ENCODE measurements at regions of chr19 and their contacts with region 1.

Region 1: DNA sequence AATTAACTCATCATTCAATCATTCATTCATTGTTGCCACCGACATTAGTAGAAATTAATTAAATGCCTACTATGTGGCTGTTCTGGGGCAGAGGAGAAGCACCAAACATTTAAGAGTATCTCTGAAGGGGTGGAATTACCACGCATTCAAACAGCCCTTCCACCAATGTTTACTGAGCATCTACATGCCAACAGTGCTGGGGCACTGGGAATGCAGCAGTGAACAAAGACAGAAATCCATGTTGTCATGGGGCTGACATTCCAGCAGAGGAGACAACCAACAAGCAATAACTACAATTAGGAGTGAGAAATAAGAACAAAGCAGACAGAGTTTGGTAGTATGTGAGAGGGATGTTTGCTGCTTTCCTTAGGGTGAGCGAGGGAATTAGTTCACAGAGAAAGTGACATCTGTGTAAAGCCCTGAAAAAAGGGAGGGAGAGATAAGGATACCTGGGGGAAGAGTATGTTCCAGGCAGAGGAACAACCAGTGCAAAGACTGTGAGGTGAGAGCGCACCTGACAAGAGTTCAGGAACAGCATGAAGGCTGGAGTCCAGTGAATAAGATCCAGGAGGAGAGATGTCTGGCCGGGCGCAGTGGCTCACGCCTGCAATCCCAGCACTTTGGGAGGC is 1.3 kb upstream of the PAK4 start:
- DNase-seq: no peak
- H3K4me3 Mint-ChIP-seq: peak overlapping the region; percentile 68
- H3K27ac Mint-ChIP-seq: peak overlapping the region; percentile 76
- H3K4me1 Mint-ChIP-seq: peaks cover 27% of the 10 kb centered on the region
- H3K27me3 Mint-ChIP-seq: peaks cover 7% of the 10 kb centered on the region

Region 2: GRCh38 chr19:39187559-39187957 is 63.3 kb after region 1 on chr19:
- intact Hi-C with region 1: loop called (anchors 1 kb)
- DNase-seq: no peak
- H3K4me3 Mint-ChIP-seq: no peak overlapping the region
- H3K27ac Mint-ChIP-seq: no peak overlapping the region
- H3K4me1 Mint-ChIP-seq: no peaks in the 10 kb centered on the region
- H3K27me3 Mint-ChIP-seq: peaks cover 9% of the 10 kb centered on the region

Region 3: DNA sequence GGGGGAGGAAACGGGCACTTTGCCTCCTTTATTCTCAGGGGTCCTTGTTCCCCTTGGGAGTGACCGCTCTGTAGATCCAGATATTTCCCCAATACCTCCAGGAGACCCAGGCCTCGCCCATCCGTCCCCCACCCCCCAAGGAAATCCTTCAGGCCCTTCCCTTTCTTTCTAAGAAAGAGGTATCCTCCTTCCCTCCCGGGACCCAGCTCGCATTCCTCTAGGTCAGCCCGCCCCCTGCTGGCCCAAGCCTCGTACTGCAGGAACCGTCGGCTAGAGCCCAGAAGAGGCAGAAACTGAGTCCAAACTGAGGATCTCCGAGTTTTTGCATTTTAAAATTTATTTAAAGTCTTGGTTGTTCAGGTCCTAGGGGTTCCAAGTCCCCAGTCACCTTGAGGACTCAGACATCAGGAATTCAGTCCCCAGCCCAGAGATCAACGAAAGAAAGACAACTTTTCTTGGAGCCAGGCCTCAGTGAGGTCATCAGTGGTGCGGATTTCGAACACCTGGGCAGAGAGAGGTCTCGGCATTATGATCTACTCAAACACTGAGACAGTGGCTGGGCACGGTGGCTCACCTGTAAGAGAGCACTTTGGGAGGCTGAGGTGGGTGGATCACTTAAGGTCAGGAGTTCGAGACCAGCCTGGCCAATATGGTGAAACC is 203.9 kb after region 1 on chr19:
- intact Hi-C with region 1: loop called (anchors 1 kb)
- DNase-seq: peak; percentile 95
- H3K4me3 Mint-ChIP-seq: no peak overlapping the region
- H3K27ac Mint-ChIP-seq: peak overlapping the region; percentile 45
- H3K4me1 Mint-ChIP-seq: peaks cover 27% of the 10 kb centered on the region
- H3K27me3 Mint-ChIP-seq: no peaks in the 10 kb centered on the region

Measured in activated CD4-positive, alpha-beta T cell treated with anti-CD3 and anti-CD28 coated beads, Interleukin-2, amount 10 ng/mL, durations not matched to agents 24 days and 14 days (primary cell).